ENCODE measurements at regions of chr12 and their contacts with region 1.

Region 1: GRCh38 chr12:69290545-69291277 is 51.3 kb downstream of the CPSF6 start:
- DNase-seq: peak; percentile 82
- ATAC-seq: peak; percentile 99
- H3K4me3 ChIP-seq: no peak overlapping the region
- H3K27ac ChIP-seq: no peak overlapping the region
- H3K4me1 ChIP-seq: peaks cover 11% of the 10 kb centered on the region
- H3K27me3 ChIP-seq: no peaks in the 10 kb centered on the region; a peak in 1 of 5 replicates
- CTCF ChIP-seq: peak; percentile 97
- EP300 ChIP-seq: no peak
- POLR2A ChIP-seq: no peak
- RAD21 ChIP-seq: peak; percentile 92

Region 2: GRCh38 chr12:69309461-69309860 is 18.8 kb after region 1 on chr12:
- CTCF ChIA-PET with region 1: no interaction called
- POLR2A ChIA-PET with region 1: no interaction called
- in situ Hi-C with region 1: no loop called
- intact Hi-C with region 1: no loop called
- DNase-seq: no peak
- ATAC-seq: no peak
- H3K4me3 ChIP-seq: no peak overlapping the region
- H3K27ac ChIP-seq: no peak overlapping the region
- H3K4me1 ChIP-seq: peaks cover 11% of the 10 kb centered on the region
- H3K27me3 ChIP-seq: no peaks in the 10 kb centered on the region; a peak in 1 of 5 replicates
- CTCF ChIP-seq: no peak
- EP300 ChIP-seq: no peak
- POLR2A ChIP-seq: no peak
- RAD21 ChIP-seq: no peak

Region 3: GRCh38 chr12:69324797-69325466 is 34.2 kb after region 1 on chr12:
- CTCF ChIA-PET with region 1: no interaction called
- POLR2A ChIA-PET with region 1: no interaction called
- in situ Hi-C with region 1: no loop called
- intact Hi-C with region 1: no loop called
- DNase-seq: no peak
- ATAC-seq: peak; percentile 54
- H3K4me3 ChIP-seq: no peak overlapping the region
- H3K27ac ChIP-seq: peak overlapping the region; percentile 22
- H3K4me1 ChIP-seq: peaks cover 74% of the 10 kb centered on the region
- H3K27me3 ChIP-seq: no peaks in the 10 kb centered on the region
- CTCF ChIP-seq: no peak
- EP300 ChIP-seq: no peak
- POLR2A ChIP-seq: peak; percentile 19 to 21; a peak in 2 of 4 replicates
- RAD21 ChIP-seq: no peak

Region 4: GRCh38 chr12:69388371-69388770 is 97.7 kb after region 1 on chr12:
- CTCF ChIA-PET with region 1: no interaction called
- POLR2A ChIA-PET with region 1: no interaction called
- in situ Hi-C with region 1: no loop called
- intact Hi-C with region 1: loop called (anchors 10 kb)
- DNase-seq: peak; percentile 43
- ATAC-seq: peak; percentile 48; the same call in 2 of the 3 replicates
- H3K4me3 ChIP-seq: no peak overlapping the region
- H3K27ac ChIP-seq: no peak overlapping the region
- H3K4me1 ChIP-seq: no peaks in the 10 kb centered on the region
- H3K27me3 ChIP-seq: no peaks in the 10 kb centered on the region
- CTCF ChIP-seq: peak; percentile 58
- EP300 ChIP-seq: no peak
- POLR2A ChIP-seq: no peak
- RAD21 ChIP-seq: 0 out of 2 replicates have a peak, but pooled peaks have one; percentile 27

Region 5: GRCh38 chr12:69585189-69586062 is 294.7 kb after region 1 on chr12 and contains the start of gene CCT2:
- CTCF ChIA-PET with region 1: no interaction called
- POLR2A ChIA-PET with region 1: no interaction called
- in situ Hi-C with region 1: no loop called
- intact Hi-C with region 1: no loop called
- DNase-seq: peak; percentile 90
- ATAC-seq: peak; percentile 94
- H3K4me3 ChIP-seq: peak within 1 kb of the TSS; percentile 89 to 100 (median 94)
- H3K27ac ChIP-seq: peak within 1 kb of the TSS; percentile 93
- H3K4me1 ChIP-seq: peaks cover 15% of the 10 kb centered on the region
- H3K27me3 ChIP-seq: no peaks in the 10 kb centered on the region; a peak in 1 of 5 replicates
- CTCF ChIP-seq: no peak; the same call in none of the 2 replicates
- EP300 ChIP-seq: no peak
- POLR2A ChIP-seq: peak; percentile 99
- RAD21 ChIP-seq: no peak; the same call in none of the 2 replicates
- total RNA-seq, gene CCT2: 388 and 601 TPM in 2 replicates

Region 6: DNA sequence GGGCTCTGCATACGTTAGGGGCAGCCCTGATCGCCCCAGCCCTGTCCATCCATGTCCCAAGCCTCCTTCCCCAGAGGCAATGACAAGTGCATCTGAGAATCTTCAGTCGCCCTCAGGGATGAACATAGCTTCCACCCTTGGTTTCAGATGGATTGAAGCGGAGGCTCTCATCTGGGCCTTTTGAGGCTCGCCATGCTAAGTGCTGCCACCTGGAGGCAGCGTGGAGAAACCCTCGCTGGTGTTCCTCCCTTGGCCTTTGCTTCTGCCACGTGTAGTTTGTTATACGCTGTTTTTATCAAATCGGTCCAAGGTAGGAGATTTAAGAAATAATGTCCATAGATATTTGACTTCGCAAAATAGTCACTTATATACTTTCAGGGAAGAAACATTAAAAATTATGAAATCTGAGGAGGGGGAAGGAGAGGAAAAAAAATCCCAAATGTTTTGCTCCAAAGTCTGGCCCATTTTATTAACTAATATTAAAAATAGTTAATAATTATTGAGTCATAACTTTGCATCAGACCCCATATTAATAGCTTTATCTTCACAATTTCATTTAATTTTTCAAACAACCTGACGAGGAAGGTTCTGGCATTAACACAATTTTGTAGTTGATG is 348.8 kb after region 1 on chr12:
- CTCF ChIA-PET with region 1: interaction called, 3 read pairs
- POLR2A ChIA-PET with region 1: no interaction called
- in situ Hi-C with region 1: no loop called
- intact Hi-C with region 1: loop called (anchors 2 kb)
- DNase-seq: peak; percentile 52
- ATAC-seq: peak; percentile 91
- H3K4me3 ChIP-seq: no peak overlapping the region
- H3K27ac ChIP-seq: no peak overlapping the region
- H3K4me1 ChIP-seq: peaks cover 7% of the 10 kb centered on the region; the same call in 1 of the 2 replicates
- H3K27me3 ChIP-seq: peaks cover 0 to 11% of the 10 kb centered on the region in 2 experiments; a peak in 1 of 5 replicates
- CTCF ChIP-seq: peak; percentile 89
- EP300 ChIP-seq: no peak
- POLR2A ChIP-seq: no peak
- RAD21 ChIP-seq: peak; percentile 30; the same call in 1 of the 2 replicates